ENCODE measurements at regions of chr15 and their contacts with region 1.

Region 1: GRCh38 chr15:40367686-40368611 is 9.9 kb downstream of the DISP2 start:
- DNase-seq: peak; percentile 93 to 95
- H3K4me3 ChIP-seq: no peak overlapping the region
- H3K27ac ChIP-seq: peak overlapping the region; percentile 60 to 64 (median 62)
- H3K4me1 ChIP-seq: peaks cover 21 to 39% of the 10 kb centered on the region in 2 donors
- H3K27me3 ChIP-seq: no peaks in the 10 kb centered on the region
- CTCF ChIP-seq: peak; percentile 34 to 100 (median 94)
- POLR2A ChIP-seq: peak in 1 of 2 donors; percentile 62

Region 2: DNA sequence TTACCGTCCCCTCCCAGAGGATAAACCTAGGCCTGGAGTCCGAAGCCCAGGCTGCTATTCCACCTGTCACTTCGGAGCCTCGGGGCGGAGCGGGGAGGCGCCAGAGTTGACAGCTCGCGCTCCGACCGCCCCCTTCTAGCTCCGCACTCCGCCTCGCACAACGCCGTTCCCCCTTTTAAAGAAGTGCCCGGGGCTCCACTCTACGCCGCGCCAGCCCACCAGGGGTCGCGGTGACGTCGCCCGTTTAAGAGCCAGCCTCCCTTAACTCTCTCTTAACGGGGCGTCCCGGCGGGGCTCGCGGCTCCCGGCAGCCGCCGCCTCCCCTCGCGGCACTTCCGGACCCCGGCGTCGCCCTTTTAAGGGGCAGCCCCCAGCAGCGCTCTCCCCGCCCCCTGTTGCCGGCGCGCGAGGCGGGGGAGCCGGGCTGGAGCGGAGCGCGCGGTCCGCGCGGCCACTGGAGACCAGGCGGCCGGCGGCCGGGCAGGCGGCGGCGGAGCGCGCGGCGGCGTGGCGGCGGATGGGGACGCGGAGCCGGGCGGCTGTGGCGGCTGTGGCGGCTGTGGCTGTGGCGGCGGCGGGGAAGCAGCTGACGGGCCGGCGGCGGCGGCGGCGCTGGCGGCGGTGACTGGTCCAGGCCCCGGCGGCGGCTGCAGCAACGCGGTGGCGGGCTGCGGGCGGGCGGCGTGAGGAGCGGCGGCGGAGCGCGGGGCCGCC is 44.6 kb before region 1 on chr15 and contains the start of gene INAFM2:
- intact Hi-C with region 1: loop called (anchors 5 kb)
- DNase-seq: peak; percentile 96 to 97
- H3K4me3 ChIP-seq: peak within 1 kb of the TSS; percentile 42 to 64 (median 59)
- H3K27ac ChIP-seq: peak within 1 kb of the TSS; percentile 56 to 99 (median 99)
- H3K4me1 ChIP-seq: peaks cover 44 to 47% of the 10 kb centered on the region in 2 donors
- H3K27me3 ChIP-seq: no peaks in the 10 kb centered on the region
- CTCF ChIP-seq: peak; percentile 52 to 87 (median 62)
- POLR2A ChIP-seq: peak; percentile 84 to 98
- total RNA-seq, gene INAFM2: 47.5 to 86.9 (median 63.8) TPM

Region 3: DNA sequence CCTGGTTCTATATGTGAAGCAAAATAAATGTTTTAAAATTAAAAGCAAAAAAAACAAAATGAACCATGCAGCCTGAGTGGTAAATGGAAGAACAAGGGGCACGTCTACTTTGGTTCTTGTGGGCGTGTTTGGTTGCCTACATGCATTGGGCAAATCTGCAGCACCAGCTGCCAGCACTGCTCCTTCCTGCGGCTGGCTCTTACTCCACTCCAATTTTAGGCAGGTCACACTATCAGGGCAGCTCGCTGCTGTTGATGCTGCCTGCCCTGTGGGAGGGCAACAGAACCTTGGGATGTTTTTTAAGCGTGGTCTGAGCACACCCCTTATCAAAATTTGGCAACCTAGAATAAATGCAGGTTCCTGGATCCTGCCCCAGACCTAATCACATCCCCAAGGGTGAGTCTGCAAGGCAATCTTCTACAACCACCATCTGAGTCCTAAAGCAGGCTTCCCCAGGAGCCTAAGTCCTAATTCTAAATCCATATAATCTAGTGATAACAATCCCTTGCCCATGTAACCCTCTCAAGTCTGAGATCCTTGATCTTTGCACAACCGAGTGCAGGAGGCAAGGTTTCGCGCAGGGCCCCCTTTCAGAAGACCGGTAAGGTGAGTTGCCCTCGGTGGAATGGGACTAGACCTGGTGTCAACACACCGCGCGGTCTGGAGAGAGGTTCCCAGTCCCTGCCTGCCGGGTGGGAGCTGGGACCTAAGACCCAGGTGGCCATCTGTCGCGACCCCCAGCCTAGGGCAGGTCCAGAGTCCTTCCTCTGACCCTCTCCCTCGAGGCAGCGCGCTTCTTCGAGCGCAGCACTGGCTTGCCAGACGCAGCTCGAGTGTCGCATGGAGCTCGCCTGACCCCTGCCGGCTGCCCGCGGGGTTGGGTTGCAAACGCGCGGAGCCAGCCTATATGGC is 53.6 kb after region 1 on chr15:
- intact Hi-C with region 1: loop called (anchors 10 kb)
- DNase-seq: peak; percentile 81 to 85
- H3K4me3 ChIP-seq: no peak overlapping the region
- H3K27ac ChIP-seq: peak overlapping the region; percentile 64 to 95 (median 87)
- H3K4me1 ChIP-seq: peaks cover 23 to 28% of the 10 kb centered on the region in 2 donors
- H3K27me3 ChIP-seq: no peaks in the 10 kb centered on the region
- CTCF ChIP-seq: peak; percentile 85 to 99 (median 97)
- POLR2A ChIP-seq: peak in 1 of 2 donors; percentile 26

Region 4: DNA sequence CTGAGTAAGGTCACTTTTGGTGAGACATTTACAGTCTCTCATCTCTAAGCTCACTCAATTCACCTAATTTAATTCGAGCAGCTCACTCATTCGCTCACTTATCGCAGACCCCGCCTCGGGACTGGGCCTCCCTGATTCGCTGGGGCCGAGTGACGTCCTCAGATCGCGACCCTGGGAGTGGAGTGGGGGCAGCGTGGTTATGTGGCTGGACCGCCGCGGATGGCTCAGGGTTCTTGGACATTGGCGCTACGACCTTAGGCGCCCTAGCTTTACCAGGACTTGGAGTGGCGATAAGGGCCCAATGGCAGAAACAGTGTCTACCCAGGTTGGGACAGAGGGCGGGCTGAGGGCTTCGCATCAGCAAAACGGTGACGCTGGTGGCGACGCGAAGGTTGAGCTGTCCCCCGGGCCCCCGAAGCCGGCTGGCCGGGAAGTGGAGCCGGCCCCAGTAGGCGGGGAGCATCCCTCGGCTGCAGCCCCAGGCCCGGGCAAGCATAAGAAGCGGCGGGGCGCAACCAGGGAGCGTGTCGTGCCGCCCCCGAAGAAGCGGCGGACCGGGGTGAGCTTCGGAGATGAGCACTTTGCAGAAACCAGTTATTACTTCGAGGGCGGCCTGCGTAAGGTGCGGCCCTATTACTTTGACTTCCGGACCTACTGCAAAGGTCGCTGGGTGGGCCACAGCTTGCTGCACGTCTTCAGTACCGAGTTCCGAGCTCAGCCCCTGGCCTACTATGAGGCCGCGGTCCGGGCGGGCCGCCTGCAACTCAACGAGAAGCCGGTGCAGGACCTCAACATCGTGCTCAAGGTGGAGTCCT is 201.4 kb after region 1 on chr15 and contains the start of gene RPUSD2:
- intact Hi-C with region 1: no loop called
- DNase-seq: peak; percentile 92 to 95
- H3K4me3 ChIP-seq: peak within 1 kb of the TSS; percentile 73 to 86 (median 78)
- H3K27ac ChIP-seq: peak within 1 kb of the TSS; percentile 35 to 48 (median 42)
- H3K4me1 ChIP-seq: peaks cover 16 to 17% of the 10 kb centered on the region in 2 donors
- H3K27me3 ChIP-seq: no peaks in the 10 kb centered on the region
- CTCF ChIP-seq: peak in 1 of 6 experiments; percentile 5
- POLR2A ChIP-seq: peak in 1 of 2 donors; percentile 80
- total RNA-seq, gene RPUSD2: 5.8 to 10.1 (median 7.1) TPM